H1 (cell line): ENCODE measurements at regions of chr12 and their contacts with region 1.

Region 1: DNA sequence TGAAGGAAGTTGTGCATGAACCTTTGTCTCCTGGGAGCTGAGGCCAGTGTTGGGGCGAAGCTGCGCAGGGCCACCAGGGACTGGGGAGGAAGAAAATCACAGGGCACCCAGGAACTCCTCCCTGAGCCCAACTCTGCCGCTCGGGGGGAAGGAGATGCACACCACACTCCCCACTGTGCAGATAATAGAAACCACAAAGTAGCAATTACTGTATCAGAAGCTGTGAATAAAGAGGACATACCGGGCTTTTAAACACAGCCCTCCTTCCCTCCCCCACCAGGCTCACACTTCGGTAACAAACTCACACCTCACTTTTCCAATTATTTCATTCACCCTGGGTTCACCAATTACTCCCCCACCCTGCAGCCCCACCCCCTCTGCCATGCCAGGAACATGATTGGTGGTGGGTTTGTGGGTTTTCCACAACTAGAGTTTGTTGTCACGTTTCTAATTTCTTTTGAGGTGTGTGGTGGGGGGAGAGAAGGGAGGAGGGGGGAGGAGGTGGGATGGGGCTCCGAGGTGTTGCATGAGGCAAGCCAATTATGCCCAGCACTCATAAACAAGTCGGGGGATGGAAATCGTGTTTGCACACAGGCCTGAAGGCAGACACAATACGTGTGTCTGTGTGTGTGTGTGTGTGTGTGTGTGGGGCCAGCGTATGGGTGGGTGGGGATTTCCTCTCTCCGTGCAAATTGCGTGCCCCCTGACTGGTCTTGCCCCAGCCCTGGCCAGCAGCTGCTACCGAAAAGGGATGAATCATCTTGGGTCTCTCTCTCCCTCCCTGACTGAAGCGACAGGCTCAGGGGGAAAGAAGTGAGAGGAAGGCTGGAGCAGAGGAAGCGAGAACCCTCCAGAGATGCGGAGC is 103.3 kb downstream of the RBM19 start:
- DNase-seq: no peak
- H3K4me3 ChIP-seq: no peak overlapping the region; a peak in 1 of 8 replicates
- H3K27ac ChIP-seq: peak overlapping the region; percentile 62
- H3K4me1 ChIP-seq: peaks cover 23 to 47% (median 35%) of the 10 kb centered on the region in 4 experiments
- H3K27me3 ChIP-seq: no peaks in the 10 kb centered on the region
- CTCF ChIP-seq: no peak
- EP300 ChIP-seq: no peak
- POLR2A ChIP-seq: no peak
- RAD21 ChIP-seq: no peak

Region 2: DNA sequence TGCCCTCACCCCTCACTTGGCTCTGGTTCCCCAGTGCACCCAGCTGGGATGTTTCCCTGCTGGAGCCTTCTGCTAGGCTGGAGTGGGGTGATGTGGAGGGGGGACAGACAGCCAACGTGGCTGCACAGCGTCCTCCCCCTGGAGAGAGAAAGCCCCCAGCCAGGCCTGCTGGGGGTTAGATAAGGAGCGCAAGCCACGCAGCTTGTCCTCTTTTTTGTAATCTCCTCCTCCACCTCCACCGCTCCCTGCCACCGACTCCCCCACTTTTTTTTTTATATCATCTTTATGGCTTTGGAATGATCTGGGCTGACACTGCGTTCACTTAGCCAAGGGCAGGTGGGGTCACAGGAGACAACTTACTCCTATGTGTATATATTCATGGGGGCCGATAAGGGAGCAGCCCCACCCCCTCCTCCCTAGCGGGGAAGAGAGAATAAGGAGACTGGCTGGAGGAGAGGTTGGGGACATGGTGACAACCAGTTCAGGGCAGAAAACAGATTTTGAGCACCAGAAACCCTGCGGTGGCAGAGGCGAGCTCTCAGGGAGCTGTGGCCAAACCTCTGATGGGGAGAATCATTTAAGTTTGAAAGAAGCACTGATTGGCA is 221.3 kb before region 1 on chr12:
- CTCF ChIA-PET with region 1: no interaction called
- POLR2A ChIA-PET with region 1: no interaction called
- DNase-seq: no peak
- H3K4me3 ChIP-seq: no peak overlapping the region
- H3K27ac ChIP-seq: no peak overlapping the region
- H3K4me1 ChIP-seq: peaks cover 0 to 12% (median 2%) of the 10 kb centered on the region in 4 experiments; a peak in 5 of 7 replicates
- H3K27me3 ChIP-seq: peaks cover 0 to 4% (median 0%) of the 10 kb centered on the region in 4 experiments; a peak in 3 of 7 replicates
- CTCF ChIP-seq: no peak
- EP300 ChIP-seq: no peak
- POLR2A ChIP-seq: no peak
- RAD21 ChIP-seq: no peak

Region 3: GRCh38 chr12:113683574-113684384 is 179.0 kb before region 1 on chr12:
- CTCF ChIA-PET with region 1: no interaction called
- POLR2A ChIA-PET with region 1: no interaction called
- DNase-seq: no peak
- H3K4me3 ChIP-seq: no peak overlapping the region
- H3K27ac ChIP-seq: no peak overlapping the region
- H3K4me1 ChIP-seq: peaks cover 0 to 8% (median 0%) of the 10 kb centered on the region in 4 experiments; a peak in 1 of 7 replicates
- H3K27me3 ChIP-seq: no peaks in the 10 kb centered on the region
- CTCF ChIP-seq: no peak
- EP300 ChIP-seq: no peak
- POLR2A ChIP-seq: no peak
- RAD21 ChIP-seq: no peak

Region 4: DNA sequence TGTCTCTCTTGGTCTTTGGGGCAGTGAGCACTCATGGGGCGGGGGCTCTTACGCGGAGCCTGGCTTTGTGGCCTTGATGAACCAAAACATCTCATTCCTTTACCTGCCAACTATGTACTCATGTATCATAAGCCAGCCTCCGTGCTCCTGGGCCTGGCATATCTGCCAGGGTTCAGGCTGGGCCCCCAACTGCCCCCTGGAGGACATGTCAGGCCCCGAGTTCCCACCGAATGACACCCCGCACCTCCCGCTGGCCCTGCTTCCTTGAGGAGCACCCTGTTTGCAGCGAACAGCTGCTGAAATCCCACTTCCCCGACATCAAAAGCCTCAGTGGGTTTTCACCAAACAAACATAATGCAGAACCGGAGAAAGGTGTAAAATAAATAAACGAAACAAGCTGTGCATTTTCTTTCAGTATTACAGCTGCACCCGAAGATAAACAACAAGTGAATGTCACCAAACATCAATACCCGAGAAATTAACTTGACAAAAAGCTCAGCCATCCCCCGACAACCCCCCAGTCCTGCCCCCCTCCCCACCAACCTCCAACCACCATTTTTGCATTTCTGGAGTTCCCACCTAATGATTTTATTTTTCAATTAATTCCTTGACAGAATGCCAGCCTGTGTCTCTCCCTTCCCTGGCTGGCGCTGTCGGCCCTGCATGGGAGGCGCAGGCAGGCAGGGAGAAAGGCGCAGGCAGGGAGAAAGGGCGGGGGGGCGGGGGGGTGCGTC is 35.9 kb before region 1 on chr12:
- CTCF ChIA-PET with region 1: interaction called, 31 read pairs
- POLR2A ChIA-PET with region 1: interaction called, 3 read pairs
- DNase-seq: no peak
- H3K4me3 ChIP-seq: no peak overlapping the region
- H3K27ac ChIP-seq: no peak overlapping the region
- H3K4me1 ChIP-seq: no peaks in the 10 kb centered on the region; a peak in 1 of 7 replicates
- H3K27me3 ChIP-seq: no peaks in the 10 kb centered on the region
- CTCF ChIP-seq: peak; percentile 37 to 54 (median 47); a peak in 3 of 4 replicates
- EP300 ChIP-seq: no peak
- POLR2A ChIP-seq: no peak
- RAD21 ChIP-seq: peak; percentile 38 to 45; a peak in 3 of 4 replicates

Region 5: DNA sequence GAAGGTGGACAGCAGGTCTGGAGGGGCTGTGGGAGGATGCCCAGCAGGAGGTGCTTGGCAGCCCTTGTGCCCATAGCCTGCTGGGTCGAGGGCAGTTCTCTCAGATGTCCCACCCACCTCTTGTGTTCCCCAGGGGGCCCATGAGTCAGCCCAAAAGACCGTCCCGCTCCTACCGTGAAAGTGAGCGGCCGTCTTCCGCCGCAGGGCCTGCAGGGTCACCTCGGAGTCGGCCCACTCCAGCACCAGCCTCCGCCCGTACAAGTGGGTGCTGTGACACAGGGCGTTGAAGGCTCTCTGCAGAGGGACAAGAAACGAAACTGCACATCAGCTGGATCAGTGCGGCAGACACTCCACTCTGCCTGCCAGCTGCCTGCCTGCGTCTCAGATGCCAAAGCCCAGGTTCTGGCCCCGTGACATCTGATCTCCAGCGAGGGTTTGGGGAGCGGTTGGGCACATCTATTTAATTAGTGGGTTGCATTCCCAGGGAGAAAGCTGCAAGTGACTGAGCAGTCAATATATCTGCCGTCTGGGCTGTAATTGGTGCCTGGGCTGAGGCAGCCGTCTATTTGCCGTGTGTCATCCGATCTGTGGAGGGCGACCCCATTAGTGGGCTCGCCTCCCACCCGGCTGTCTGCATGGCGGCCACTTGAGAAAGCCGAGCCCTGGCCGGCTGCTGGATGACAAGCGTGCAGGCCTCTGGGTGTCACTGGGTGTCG is 18.2 kb before region 1 on chr12:
- CTCF ChIA-PET with region 1: interaction called, 36 read pairs
- POLR2A ChIA-PET with region 1: interaction called, 14 read pairs
- DNase-seq: no peak
- H3K4me3 ChIP-seq: no peak overlapping the region
- H3K27ac ChIP-seq: no peak overlapping the region
- H3K4me1 ChIP-seq: peaks cover 0 to 2% (median 0%) of the 10 kb centered on the region in 4 experiments; a peak in 2 of 7 replicates
- H3K27me3 ChIP-seq: no peaks in the 10 kb centered on the region
- CTCF ChIP-seq: no peak
- EP300 ChIP-seq: no peak
- POLR2A ChIP-seq: no peak
- RAD21 ChIP-seq: no peak

Region 6: GRCh38 chr12:113875691-113876090 is 12.9 kb after region 1 on chr12:
- CTCF ChIA-PET with region 1: interaction called, 40 read pairs
- POLR2A ChIA-PET with region 1: interaction called, 8 read pairs
- DNase-seq: no peak
- H3K4me3 ChIP-seq: no peak overlapping the region
- H3K27ac ChIP-seq: no peak overlapping the region
- H3K4me1 ChIP-seq: no peaks in the 10 kb centered on the region
- H3K27me3 ChIP-seq: no peaks in the 10 kb centered on the region
- CTCF ChIP-seq: no peak
- EP300 ChIP-seq: no peak
- POLR2A ChIP-seq: no peak
- RAD21 ChIP-seq: no peak

Region 7: DNA sequence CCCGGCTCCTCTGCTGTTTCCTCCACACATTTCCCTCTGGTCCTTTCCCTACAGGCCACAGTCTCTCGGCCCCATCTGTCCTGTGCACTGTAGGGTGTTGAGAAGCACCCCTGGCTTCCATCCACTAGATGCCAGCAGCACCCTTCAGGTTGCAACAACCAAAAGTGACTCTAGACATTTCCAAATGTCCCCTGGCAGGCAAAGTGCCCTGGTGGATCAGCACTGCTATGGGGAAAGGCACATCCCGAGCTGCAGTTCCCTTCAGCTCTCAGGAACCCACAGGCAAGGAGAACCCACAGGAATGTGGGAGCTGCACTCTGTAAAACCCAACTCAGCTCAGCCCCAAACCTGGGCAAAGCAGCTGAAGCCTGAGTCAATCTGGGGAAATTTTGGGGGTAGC is 26.3 kb after region 1 on chr12:
- CTCF ChIA-PET with region 1: interaction called, 40 read pairs
- POLR2A ChIA-PET with region 1: no interaction called
- DNase-seq: no peak
- H3K4me3 ChIP-seq: no peak overlapping the region
- H3K27ac ChIP-seq: no peak overlapping the region
- H3K4me1 ChIP-seq: peaks cover 0 to 5% (median 2%) of the 10 kb centered on the region in 4 experiments; a peak in 4 of 7 replicates
- H3K27me3 ChIP-seq: no peaks in the 10 kb centered on the region
- CTCF ChIP-seq: peak; percentile 2 to 25 (median 16); a peak in 3 of 4 replicates
- EP300 ChIP-seq: no peak
- POLR2A ChIP-seq: no peak
- RAD21 ChIP-seq: peak; percentile 38 to 62